ENCODE measurements at regions of chr14 and their contacts with region 1.

Region 1: DNA sequence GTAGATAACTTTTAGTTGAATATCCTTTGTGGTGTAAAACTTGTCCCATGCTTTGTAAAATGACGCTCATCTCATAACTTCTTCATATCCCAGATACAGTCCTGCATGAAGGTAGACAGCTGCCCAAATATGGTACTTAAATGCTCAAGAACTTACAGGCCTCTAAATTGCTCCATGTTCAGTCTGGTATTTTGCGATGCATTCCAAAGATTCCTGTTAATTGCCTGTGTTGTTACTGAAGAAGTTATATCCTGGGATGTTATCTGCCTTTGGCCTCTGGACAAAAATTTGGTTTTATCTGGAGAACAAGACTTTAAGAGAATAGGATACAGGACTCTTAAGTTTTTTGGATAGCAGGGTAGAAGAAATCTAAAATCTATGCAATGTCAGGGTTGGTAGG is 473.0 kb downstream of the PCNX1 start:
- DNase-seq: no peak
- ATAC-seq: no peak
- H3K4me3 Mint-ChIP-seq: no peak overlapping the region
- H3K27ac Mint-ChIP-seq: no peak overlapping the region
- H3K4me1 Mint-ChIP-seq: peaks cover 78% of the 10 kb centered on the region
- H3K27me3 Mint-ChIP-seq: no peaks in the 10 kb centered on the region
- CTCF ChIP-seq: no peak

Region 2: GRCh38 chr14:71395151-71395604 is 14.9 kb after region 1 on chr14:
- CTCF ChIA-PET with region 1: no interaction called
- POLR2A ChIA-PET with region 1: interaction called, 5 read pairs
- intact Hi-C with region 1: loop called (anchors 2 kb)
- DNase-seq: no peak
- ATAC-seq: no peak
- H3K4me3 Mint-ChIP-seq: no peak overlapping the region
- H3K27ac Mint-ChIP-seq: peak overlapping the region; percentile 86
- H3K4me1 Mint-ChIP-seq: peaks cover 86% of the 10 kb centered on the region
- H3K27me3 Mint-ChIP-seq: no peaks in the 10 kb centered on the region
- CTCF ChIP-seq: no peak

Measured in activated B cell treated with CpG ODN at 0.5 μM for 24 hours (primary cell).